Lower leg skin (tissue), 4 donors: ENCODE measurements at regions of chrX and their contacts with region 1.

Region 1: DNA sequence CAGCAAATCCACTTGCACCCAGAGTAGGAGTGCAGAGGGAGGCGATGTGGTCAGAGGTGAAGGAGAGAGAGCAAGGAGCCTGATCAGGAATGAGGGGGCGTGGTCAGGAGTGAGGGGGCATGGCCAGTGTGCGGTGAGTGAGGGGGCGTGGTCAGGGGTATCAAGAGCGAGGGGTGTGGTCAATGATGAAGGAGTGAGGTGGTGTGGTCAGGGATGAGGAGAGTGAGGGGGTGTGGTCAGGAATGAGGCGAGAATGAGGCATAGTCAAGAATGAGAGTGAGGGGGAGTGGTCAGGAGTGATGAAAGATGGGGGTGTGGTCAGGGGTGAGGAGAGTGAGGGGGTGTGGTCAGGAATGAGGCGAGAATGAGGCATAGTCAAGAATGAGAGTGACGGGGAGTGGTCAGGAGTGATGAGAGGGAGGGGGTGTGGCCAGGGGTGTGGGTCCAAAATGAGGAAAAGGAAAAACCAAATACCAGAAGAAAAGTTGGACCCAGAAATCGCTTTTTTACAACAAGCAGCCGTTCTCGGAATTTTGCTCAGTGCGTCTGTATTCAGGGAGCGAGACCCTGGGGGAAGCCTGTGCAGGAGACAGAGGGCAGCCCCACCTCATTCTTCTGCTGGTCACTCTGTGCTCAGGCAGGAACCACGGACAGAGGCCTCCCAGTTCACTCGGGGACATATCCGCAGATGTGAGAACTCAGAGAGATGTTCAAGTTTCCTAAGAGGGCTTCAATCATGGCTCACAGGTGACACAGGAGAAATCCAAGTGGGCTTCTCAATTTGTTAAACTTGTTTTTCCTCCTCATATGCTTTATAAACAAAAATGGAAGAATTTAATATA is 47.5 kb downstream of the MAGEA1 start:
- DNase-seq: no peak
- H3K4me3 ChIP-seq: no peak overlapping the region
- CTCF ChIP-seq: no peak
- POLR2A ChIP-seq: no peak

Region 2: GRCh38 chrX:151478058-151478457 is 1748.5 kb before region 1 on chrX:
- intact Hi-C with region 1: loop called (anchors 5 kb)
- DNase-seq: no peak
- H3K4me3 ChIP-seq: no peak overlapping the region
- CTCF ChIP-seq: no peak
- POLR2A ChIP-seq: no peak